Heart left ventricle (tissue), 16 donors: ENCODE measurements at regions of chr16 and their contacts with region 1.

Region 1: DNA sequence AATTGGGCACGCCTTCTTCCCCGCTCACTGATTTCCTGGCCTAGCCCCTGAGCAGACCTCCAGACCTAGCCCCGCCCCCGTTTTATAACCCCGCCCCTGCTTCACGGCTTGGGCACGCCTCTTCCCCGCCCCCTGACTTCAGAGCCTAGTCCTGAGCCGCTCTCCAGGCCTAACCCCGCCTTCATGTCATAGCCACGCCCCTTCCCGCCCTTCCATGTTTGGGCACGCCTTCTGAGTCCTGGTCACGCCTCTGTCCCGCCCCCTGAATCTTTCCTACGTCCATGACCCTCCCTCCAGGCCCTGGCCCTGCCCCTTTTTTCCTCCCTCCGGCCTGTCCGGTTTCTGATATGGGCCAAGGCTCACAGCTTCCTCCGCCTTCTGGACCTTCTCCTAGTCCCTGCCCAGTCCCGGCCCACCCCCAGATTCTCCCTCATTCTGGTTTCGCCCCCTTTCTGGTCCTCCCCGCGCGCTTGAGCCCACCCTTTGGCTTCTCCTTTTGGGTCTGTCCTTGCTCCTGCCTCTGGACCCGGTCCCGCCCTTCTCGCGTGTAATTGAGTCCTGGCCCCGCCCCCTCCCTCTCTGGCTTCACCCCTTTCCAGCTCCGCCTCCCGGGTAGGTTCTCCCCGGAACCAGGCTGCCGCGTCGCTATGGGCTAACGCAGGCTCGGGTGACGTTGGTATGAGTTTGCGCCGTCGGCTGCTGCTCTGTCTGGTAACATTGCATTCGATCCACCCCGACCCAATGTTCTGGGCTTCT is 15.1 kb upstream of the EEF2K start:
- DNase-seq: peak; percentile 100
- ATAC-seq: peak; percentile 78 to 87 (median 86)
- H3K4me3 ChIP-seq: peak overlapping the region in 11 of 12 donors; percentile 34 to 94 (median 78)
- H3K27ac ChIP-seq: peak overlapping the region; percentile 90 to 99 (median 96)
- H3K4me1 ChIP-seq: peaks cover 4 to 54% (median 29%) of the 10 kb centered on the region in 12 donors
- H3K27me3 ChIP-seq: no peaks in the 10 kb centered on the region
- CTCF ChIP-seq: no peak
- POLR2A ChIP-seq: peak in 1 of 2 donors; percentile 85

Region 2: DNA sequence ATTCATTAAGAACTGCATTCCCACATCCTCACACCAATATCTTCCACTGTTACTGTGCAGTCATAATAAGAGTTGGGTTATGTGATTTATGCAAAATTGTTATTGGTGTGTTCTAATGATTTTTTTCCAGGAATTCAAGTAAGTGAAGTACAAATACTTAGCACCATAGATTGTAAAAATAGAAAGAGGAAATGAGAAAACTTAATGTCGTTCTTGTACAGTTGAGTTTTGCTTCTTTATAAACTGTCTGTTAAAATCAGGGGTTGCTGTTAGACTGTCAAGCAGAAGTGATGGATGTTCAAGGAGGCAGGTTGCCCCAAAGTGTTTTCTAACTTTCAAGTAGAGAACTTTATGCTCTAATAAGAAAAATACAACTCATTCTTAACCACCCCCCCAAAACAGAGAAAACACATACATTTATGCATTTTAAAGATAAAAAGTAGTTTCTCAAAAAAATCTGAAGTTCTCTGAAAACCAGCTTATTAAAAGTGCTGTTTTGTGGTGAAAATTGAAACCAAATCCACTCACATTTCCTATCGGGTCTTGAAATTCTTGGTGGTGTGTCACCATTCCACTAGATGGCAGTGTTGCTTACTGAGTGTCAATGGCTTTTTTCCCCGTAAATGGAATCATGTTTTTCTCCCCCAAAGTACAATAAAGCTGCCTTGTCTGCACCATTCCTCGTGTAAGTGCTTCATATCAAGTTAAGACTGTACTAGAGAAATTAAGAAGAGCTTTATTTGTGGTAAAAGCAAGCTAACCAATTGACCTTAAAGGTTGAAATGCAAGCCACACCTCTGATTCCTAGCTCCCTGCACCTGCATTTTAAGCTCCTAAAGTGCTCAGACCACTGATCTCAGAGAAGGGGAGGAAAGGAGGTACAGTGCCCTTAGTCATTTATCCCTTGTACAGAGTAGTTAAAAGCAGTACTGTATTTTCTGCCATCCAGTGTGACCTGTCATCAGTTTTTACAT is 533.9 kb before region 1 on chr16:
- intact Hi-C with region 1: loop called in 1 of 10 experiments (anchors 10 kb)
- DNase-seq: no peak
- ATAC-seq: no peak
- H3K4me3 ChIP-seq: no peak overlapping the region
- H3K27ac ChIP-seq: peak overlapping the region in 1 of 12 donors; percentile 38
- H3K4me1 ChIP-seq: peaks cover 0 to 71% (median 0%) of the 10 kb centered on the region in 12 donors
- H3K27me3 ChIP-seq: no peaks in the 10 kb centered on the region
- CTCF ChIP-seq: peak; percentile 75 to 92 (median 82)
- POLR2A ChIP-seq: no peak

Region 3: GRCh38 chr16:22001591-22001990 is 189.4 kb before region 1 on chr16:
- intact Hi-C with region 1: loop called (anchors 1 to 5 kb)
- DNase-seq: no peak
- ATAC-seq: peak in 1 of 4 donors; percentile 57
- H3K4me3 ChIP-seq: no peak overlapping the region
- H3K27ac ChIP-seq: no peak overlapping the region
- H3K4me1 ChIP-seq: peaks cover 0 to 32% (median 10%) of the 10 kb centered on the region in 12 donors
- H3K27me3 ChIP-seq: no peaks in the 10 kb centered on the region
- CTCF ChIP-seq: no peak
- POLR2A ChIP-seq: no peak

Region 4: GRCh38 chr16:22077700-22078313 is 113.1 kb before region 1 on chr16:
- intact Hi-C with region 1: loop called in 5 of 10 experiments (anchors 5 to 10 kb)
- DNase-seq: peak in 4 of 5 donors; percentile 38 to 55 (median 51)
- ATAC-seq: peak in 3 of 4 donors; percentile 44 to 55 (median 54)
- H3K4me3 ChIP-seq: no peak overlapping the region
- H3K27ac ChIP-seq: no peak overlapping the region
- H3K4me1 ChIP-seq: peaks cover 0 to 17% (median 0%) of the 10 kb centered on the region in 12 donors
- H3K27me3 ChIP-seq: no peaks in the 10 kb centered on the region
- CTCF ChIP-seq: peak; percentile 72 to 89 (median 82)
- POLR2A ChIP-seq: no peak

Region 5: GRCh38 chr16:22206013-22206841 is 15.3 kb after region 1 on chr16 and contains the start of gene EEF2K:
- intact Hi-C with region 1: loop called in 2 of 10 experiments (anchors 1 to 2 kb)
- DNase-seq: peak; percentile 89 to 95 (median 93)
- ATAC-seq: peak; percentile 87 to 94 (median 92)
- H3K4me3 ChIP-seq: peak within 1 kb of the TSS; percentile 77 to 98 (median 88)
- H3K27ac ChIP-seq: peak within 1 kb of the TSS; percentile 89 to 97 (median 92)
- H3K4me1 ChIP-seq: peaks cover 0 to 44% (median 17%) of the 10 kb centered on the region in 12 donors
- H3K27me3 ChIP-seq: no peaks in the 10 kb centered on the region
- CTCF ChIP-seq: peak; percentile 71 to 95 (median 85)
- POLR2A ChIP-seq: peak in 1 of 2 donors; percentile 53
- total RNA-seq, gene EEF2K: 16.4 to 33.6 (median 24.6) TPM

Region 6: GRCh38 chr16:22374311-22375116 is 183.6 kb after region 1 on chr16 and contains the start of gene CDR2:
- intact Hi-C with region 1: loop called in 2 of 10 experiments (anchors 5 to 10 kb)
- DNase-seq: peak; percentile 99
- ATAC-seq: peak; percentile 97 to 98 (median 98)
- H3K4me3 ChIP-seq: peak within 1 kb of the TSS; percentile 64 to 99 (median 90)
- H3K27ac ChIP-seq: peak within 1 kb of the TSS; percentile 56 to 91 (median 80)
- H3K4me1 ChIP-seq: peaks cover 0 to 50% (median 23%) of the 10 kb centered on the region in 12 donors
- H3K27me3 ChIP-seq: no peaks in the 10 kb centered on the region
- CTCF ChIP-seq: no peak
- POLR2A ChIP-seq: peak; percentile 72 to 93
- total RNA-seq, gene CDR2: 4.7 to 12.4 (median 6.0) TPM